ENCODE measurements at regions of chr1 and their contacts with region 1.

Region 1: GRCh38 chr1:74771913-74772515 is 39.1 kb downstream of the TYW3 start:
- DNase-seq: peak in 2 of 4 donors; percentile 32 to 58
- ATAC-seq: peak; percentile 75
- H3K4me3 ChIP-seq: no peak overlapping the region
- H3K27ac ChIP-seq: no peak overlapping the region
- H3K4me1 ChIP-seq: no peaks in the 10 kb centered on the region
- H3K27me3 ChIP-seq: peaks cover 4 to 13% of the 10 kb centered on the region in 2 donors
- CTCF ChIP-seq: peak; percentile 43 to 65

Region 2: DNA sequence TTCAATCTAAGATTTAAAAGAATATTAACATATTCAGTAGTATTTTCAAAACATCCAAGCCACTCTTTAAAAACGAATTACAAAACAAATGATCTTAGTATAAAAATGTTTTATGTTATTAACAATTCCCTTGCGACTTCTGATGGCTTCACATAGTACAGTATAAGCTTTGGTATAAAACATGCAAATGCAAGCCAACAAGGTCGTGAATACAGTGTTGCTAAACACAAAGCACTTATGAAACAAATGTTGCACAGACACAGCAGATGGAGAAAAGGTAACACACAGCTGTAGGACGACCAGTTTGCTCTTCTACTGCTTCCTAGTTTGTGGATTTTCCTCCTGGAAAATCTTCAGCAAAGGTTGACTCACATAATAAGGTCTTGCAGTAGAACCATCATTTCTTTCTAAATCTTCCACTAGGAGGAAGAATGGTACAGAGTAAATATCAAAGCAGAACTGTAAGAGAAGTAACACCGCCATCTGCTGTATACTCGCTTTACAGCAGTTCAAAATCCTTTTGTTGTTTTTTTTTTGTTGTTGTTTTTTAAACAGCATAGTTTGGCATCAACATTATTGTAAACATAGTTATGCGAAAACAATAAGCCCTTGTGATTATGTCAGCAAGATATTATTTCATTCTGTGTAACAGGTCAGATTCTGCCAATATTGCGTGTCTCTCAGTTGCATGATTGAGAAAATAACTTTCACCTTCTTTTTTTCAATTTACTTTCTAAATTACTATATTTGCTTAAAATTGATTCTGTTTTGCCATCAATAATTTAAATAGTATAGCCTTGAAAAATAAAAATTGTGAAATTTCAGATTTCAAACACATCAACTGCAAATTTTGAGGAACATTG is 431.6 kb after region 1 on chr1:
- intact Hi-C with region 1: loop called in 1 of 2 experiments (anchors 5 kb)
- DNase-seq: peak in 2 of 4 donors; percentile 22 to 50
- ATAC-seq: peak; percentile 87
- H3K4me3 ChIP-seq: no peak overlapping the region
- H3K27ac ChIP-seq: no peak overlapping the region
- H3K4me1 ChIP-seq: no peaks in the 10 kb centered on the region
- H3K27me3 ChIP-seq: no peaks in the 10 kb centered on the region
- CTCF ChIP-seq: peak; percentile 28 to 76

Measured in left lung (tissue), 14 donors.